ENCODE measurements at regions of chr2 and their contacts with region 1.

Region 1: GRCh38 chr2:29033172-29033571 is 41.2 kb downstream of the PCARE start:
- DNase-seq: peak; percentile 63 to 80
- H3K4me3 ChIP-seq: no peak overlapping the region
- H3K27ac ChIP-seq: no peak overlapping the region
- H3K4me1 ChIP-seq: peaks cover 14% of the 10 kb centered on the region
- H3K27me3 ChIP-seq: no peaks in the 10 kb centered on the region
- CTCF ChIP-seq: no peak

Region 2: GRCh38 chr2:28976584-28976983 is 56.6 kb before region 1 on chr2:
- CTCF ChIA-PET with region 1: no interaction called
- POLR2A ChIA-PET with region 1: no interaction called
- intact Hi-C with region 1: loop called (anchors 1 kb)
- DNase-seq: peak; percentile 92 to 99
- H3K4me3 ChIP-seq: no peak overlapping the region
- H3K27ac ChIP-seq: peak overlapping the region; percentile 56
- H3K4me1 ChIP-seq: peaks cover 39% of the 10 kb centered on the region
- H3K27me3 ChIP-seq: no peaks in the 10 kb centered on the region
- CTCF ChIP-seq: no peak

Region 3: GRCh38 chr2:29108225-29108624 is 75.1 kb after region 1 on chr2:
- CTCF ChIA-PET with region 1: no interaction called
- POLR2A ChIA-PET with region 1: no interaction called
- intact Hi-C with region 1: loop called (anchors 1 kb)
- DNase-seq: peak; percentile 77 to 94
- H3K4me3 ChIP-seq: peak overlapping the region; percentile 28; the same call in 1 of the 2 replicates
- H3K27ac ChIP-seq: peak overlapping the region; percentile 97
- H3K4me1 ChIP-seq: peaks cover 66% of the 10 kb centered on the region
- H3K27me3 ChIP-seq: no peaks in the 10 kb centered on the region
- CTCF ChIP-seq: no peak

Region 4: DNA sequence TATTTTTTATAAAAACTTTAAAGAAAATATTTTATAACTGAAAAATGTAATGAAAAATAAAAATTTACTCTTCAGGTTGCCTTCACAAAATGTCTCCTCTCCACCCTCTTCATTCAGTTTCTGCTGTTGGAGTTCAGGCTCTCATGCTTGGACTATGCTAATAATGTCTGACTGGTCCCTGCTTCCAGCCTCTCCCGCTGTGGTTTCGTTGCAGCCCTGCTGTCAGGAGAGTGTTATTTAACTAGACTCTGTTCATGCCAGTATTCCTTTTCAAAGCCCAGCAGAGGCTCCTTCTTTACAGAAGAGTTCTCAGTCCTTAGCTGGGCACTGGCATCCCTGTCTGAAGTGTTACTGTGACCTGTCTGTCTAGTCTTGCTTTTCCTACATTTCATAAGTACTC is 122.4 kb after region 1 on chr2:
- CTCF ChIA-PET with region 1: no interaction called
- POLR2A ChIA-PET with region 1: interaction called, 21 read pairs
- intact Hi-C with region 1: no loop called
- DNase-seq: no peak
- H3K4me3 ChIP-seq: no peak overlapping the region
- H3K27ac ChIP-seq: no peak overlapping the region
- H3K4me1 ChIP-seq: no peaks in the 10 kb centered on the region
- H3K27me3 ChIP-seq: no peaks in the 10 kb centered on the region
- CTCF ChIP-seq: no peak

Region 5: DNA sequence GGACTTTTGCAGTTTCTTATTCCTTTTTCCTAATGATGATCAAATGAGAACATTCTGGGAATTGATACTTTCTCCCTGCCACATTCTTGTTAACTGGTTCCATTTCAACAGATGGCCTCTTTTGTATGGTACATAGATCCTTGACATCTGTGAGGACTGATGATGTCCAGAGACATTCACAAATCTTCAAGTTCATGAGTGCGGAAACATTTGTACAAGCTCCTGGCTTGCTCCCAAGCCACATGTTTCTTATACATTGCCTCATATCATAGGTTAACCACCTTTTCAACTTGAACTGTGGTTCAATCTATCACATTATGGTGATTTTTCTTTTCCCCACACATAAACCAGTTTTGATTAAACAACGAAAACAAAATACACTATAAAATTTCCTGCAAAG is 349.3 kb after region 1 on chr2:
- CTCF ChIA-PET with region 1: no interaction called
- POLR2A ChIA-PET with region 1: no interaction called
- intact Hi-C with region 1: no loop called
- DNase-seq: no peak
- H3K4me3 ChIP-seq: no peak overlapping the region
- H3K27ac ChIP-seq: no peak overlapping the region
- H3K4me1 ChIP-seq: no peaks in the 10 kb centered on the region
- H3K27me3 ChIP-seq: peaks cover 78% of the 10 kb centered on the region
- CTCF ChIP-seq: no peak

Measured in PC-9 (cell line).